ENCODE measurements at regions of chr5 and their contacts with region 1.

Region 1: GRCh38 chr5:142888469-142889085 is 118.4 kb downstream of the ARHGAP26 start:
- DNase-seq: no peak
- H3K4me3 Mint-ChIP-seq: no peak overlapping the region
- H3K27ac Mint-ChIP-seq: no peak overlapping the region
- H3K4me1 Mint-ChIP-seq: peaks cover 19% of the 10 kb centered on the region
- H3K27me3 Mint-ChIP-seq: no peaks in the 10 kb centered on the region

Region 2: DNA sequence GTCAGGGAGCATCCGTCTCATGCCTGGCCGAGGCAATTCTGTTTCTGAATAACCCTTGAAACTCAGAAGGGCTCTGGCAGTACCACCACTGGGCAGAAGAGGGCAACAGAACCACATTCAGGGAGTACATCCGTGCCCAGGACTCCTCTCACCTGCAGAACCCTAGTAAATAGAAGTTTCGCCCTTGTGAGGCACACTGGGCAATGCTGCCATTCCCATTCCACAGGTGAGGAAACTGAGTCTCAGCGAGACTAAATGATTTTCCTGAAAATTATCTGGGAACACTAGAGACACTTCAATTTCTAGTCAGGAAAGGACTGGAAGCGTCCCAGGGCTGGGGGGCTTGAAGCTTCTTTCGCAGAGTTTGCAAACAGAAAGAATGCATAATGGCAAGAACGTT is 277.4 kb before region 1 on chr5:
- intact Hi-C with region 1: loop called (anchors 2 kb)
- DNase-seq: peak; percentile 44
- H3K4me3 Mint-ChIP-seq: no peak overlapping the region
- H3K27ac Mint-ChIP-seq: no peak overlapping the region
- H3K4me1 Mint-ChIP-seq: no peaks in the 10 kb centered on the region
- H3K27me3 Mint-ChIP-seq: peaks cover 19% of the 10 kb centered on the region

Region 3: GRCh38 chr5:142685418-142686209 is 203.0 kb before region 1 on chr5 and contains the start of gene FGF1:
- intact Hi-C with region 1: no loop called
- DNase-seq: no peak
- H3K4me3 Mint-ChIP-seq: no peak within 1 kb of the TSS
- H3K27ac Mint-ChIP-seq: no peak within 1 kb of the TSS
- H3K4me1 Mint-ChIP-seq: no peaks in the 10 kb centered on the region
- H3K27me3 Mint-ChIP-seq: peaks cover 12% of the 10 kb centered on the region
- total RNA-seq, gene FGF1: 0.08 TPM in 1 of 2 replicates, not detected in the other